CD8-positive, alpha-beta T cell (primary cell): ENCODE measurements at regions of chr1 and their contacts with region 1.

Region 1: DNA sequence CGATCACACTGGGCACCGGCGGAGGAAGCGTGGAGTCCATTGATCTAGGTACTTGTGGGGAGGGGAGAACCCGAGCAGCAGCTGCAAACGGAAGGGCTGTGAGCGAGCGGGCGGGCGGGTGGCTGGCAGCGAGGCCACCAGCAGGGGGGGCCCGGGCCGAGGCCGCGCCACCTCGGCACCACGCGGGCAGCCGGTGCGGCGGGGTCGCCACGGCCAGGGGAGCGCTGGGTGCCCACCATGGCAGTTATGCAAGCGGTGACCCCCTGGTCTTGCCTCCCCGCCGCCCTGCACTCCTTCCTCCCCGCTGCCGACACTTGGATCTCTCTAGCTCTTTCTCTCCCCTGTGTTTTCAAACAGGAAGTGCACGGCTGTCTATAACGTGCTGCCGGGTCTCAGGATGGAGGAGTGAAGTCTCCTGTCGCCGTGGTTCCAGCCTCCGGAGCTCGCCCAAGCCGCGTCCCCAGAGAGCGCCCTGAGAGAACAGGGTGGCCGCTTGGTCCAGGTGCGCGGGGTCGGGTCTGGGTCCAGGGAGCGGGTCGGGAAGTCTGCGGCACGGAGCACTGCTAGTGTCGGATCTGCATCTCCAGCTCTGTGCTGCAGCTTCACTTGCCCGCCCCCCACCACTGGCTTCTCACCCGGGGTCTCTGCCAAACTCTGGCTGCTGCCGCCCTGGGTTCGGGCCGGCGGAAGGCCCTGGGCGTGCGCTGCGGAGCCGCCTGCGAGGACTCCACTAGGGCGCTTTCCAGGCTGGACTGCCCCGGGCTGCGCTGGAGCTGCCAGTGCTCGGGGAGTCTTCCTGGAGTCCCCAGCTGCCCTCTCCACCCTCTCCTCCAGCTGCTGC is 22.7 kb downstream of the LRRC8D start:
- DNase-seq: peak; percentile 55 to 89 (median 77)
- ATAC-seq: peak; percentile 77
- H3K4me3 ChIP-seq: peak overlapping the region; percentile 79 to 92
- H3K4me3 Mint-ChIP-seq: peak overlapping the region; percentile 97
- H3K27ac ChIP-seq: peak overlapping the region; percentile 56 to 75
- H3K27ac Mint-ChIP-seq: peak overlapping the region; percentile 92
- H3K4me1 ChIP-seq: peaks cover 36% of the 10 kb centered on the region
- H3K4me1 Mint-ChIP-seq: peaks cover 53% of the 10 kb centered on the region
- H3K27me3 ChIP-seq: no peaks in the 10 kb centered on the region
- H3K27me3 Mint-ChIP-seq: no peaks in the 10 kb centered on the region
- CTCF ChIP-seq: peak; percentile 79

Region 2: GRCh38 chr1:89820422-89821321 is 22.8 kb before region 1 on chr1 and contains the start of gene LRRC8D:
- CTCF ChIA-PET with region 1: interaction called, 34 read pairs
- POLR2A ChIA-PET with region 1: interaction called, 50 read pairs
- intact Hi-C with region 1: loop called (anchors 1 kb)
- DNase-seq: peak; percentile 10 to 81 (median 64)
- ATAC-seq: peak; percentile 52
- H3K4me3 ChIP-seq: peak within 1 kb of the TSS; percentile 78 to 82
- H3K4me3 Mint-ChIP-seq: peak within 1 kb of the TSS; percentile 87
- H3K27ac ChIP-seq: peak within 1 kb of the TSS; percentile 51 to 63
- H3K27ac Mint-ChIP-seq: peak within 1 kb of the TSS; percentile 91
- H3K4me1 ChIP-seq: peaks cover 23% of the 10 kb centered on the region
- H3K4me1 Mint-ChIP-seq: peaks cover 44% of the 10 kb centered on the region
- H3K27me3 ChIP-seq: no peaks in the 10 kb centered on the region
- H3K27me3 Mint-ChIP-seq: no peaks in the 10 kb centered on the region
- CTCF ChIP-seq: no peak
- total RNA-seq, gene LRRC8D: 14.2 to 16.9 TPM

Region 3: DNA sequence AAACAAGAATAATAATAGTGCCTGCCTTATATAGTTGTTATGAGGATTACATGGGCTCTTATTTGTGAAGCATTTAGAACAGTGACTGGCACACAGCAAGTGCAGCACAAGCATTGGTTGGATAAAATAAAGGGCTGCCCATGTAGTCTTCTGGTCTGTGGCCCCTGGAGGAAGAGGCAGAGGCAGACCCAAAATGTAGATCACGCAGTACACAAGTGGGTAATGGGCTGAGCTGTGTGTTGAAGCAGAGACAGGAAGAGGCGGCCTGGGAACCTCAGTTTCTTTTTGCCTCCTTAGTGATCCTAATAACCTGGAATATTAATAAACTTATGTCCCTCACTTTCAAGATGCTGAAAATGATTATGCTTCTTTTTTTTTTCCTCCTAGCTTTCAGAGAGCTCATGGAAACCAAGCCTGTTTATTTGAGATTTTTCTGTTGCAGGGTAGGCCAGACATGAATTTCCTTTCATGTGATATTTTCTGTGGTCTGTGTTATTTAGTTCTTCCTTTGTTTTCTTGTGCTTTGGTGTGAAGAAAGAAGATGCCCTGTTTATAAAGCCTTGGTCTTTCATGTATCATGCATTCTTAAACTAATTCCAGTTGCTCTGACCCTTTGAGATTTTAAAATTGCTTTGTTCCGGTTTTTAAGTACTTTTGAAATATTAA is 19.8 kb after region 1 on chr1:
- CTCF ChIA-PET with region 1: interaction called, 14 read pairs
- POLR2A ChIA-PET with region 1: interaction called, 11 read pairs
- intact Hi-C with region 1: loop called in 1 of 2 experiments (anchors 2 kb)
- DNase-seq: peak in 2 of 9 experiments; percentile 35 to 52
- ATAC-seq: peak; percentile 63
- H3K4me3 ChIP-seq: no peak overlapping the region
- H3K4me3 Mint-ChIP-seq: peak overlapping the region; percentile 73
- H3K27ac ChIP-seq: peak overlapping the region; percentile 3 to 63
- H3K27ac Mint-ChIP-seq: peak overlapping the region; percentile 98
- H3K4me1 ChIP-seq: peaks cover 39% of the 10 kb centered on the region
- H3K4me1 Mint-ChIP-seq: peaks cover 77% of the 10 kb centered on the region
- H3K27me3 ChIP-seq: no peaks in the 10 kb centered on the region
- H3K27me3 Mint-ChIP-seq: no peaks in the 10 kb centered on the region
- CTCF ChIP-seq: no peak

Region 4: DNA sequence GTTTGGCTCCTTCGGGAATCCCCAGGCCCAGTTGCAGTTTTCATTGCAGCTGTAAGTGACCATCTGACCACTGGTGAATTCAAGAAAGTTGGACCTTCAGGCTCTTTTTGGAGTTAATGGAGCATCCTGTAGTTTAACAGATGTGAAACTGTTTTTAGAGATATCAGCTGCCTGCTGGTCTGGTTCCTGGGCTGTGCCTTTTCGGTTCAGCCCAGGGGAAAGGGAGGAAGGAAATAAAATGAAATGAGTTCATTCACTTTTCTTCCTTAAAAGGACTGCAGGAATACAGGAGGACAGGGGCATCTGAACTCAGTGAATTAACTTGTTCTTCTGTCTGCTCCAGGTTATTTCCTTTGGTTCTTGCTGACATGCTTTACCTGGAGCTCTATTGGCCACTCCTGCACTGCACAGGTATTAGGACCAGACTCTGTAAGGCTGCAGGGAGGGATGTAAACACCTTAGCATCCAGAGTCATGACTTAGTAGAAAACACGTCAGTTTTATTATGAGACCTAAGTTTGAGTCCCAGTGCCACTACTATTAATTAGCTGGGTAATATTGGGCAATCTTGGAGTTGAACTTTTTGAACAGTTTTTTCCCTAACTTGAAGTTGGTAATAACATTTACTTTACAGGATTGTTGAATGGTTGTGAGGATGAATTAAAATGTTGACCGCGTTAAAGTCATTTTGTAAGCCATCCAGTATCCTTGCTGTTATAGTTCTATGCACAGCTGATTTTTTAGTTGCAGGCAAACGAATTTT is 60.9 kb after region 1 on chr1:
- CTCF ChIA-PET with region 1: interaction called, 3 read pairs
- POLR2A ChIA-PET with region 1: interaction called, 3 read pairs
- intact Hi-C with region 1: loop called in 1 of 2 experiments (anchors 5 kb)
- DNase-seq: no peak
- ATAC-seq: no peak
- H3K4me3 ChIP-seq: no peak overlapping the region
- H3K4me3 Mint-ChIP-seq: no peak overlapping the region
- H3K27ac ChIP-seq: no peak overlapping the region
- H3K27ac Mint-ChIP-seq: no peak overlapping the region
- H3K4me1 ChIP-seq: no peaks in the 10 kb centered on the region
- H3K4me1 Mint-ChIP-seq: peaks cover 70% of the 10 kb centered on the region
- H3K27me3 ChIP-seq: no peaks in the 10 kb centered on the region
- H3K27me3 Mint-ChIP-seq: no peaks in the 10 kb centered on the region
- CTCF ChIP-seq: no peak

Region 5: GRCh38 chr1:89987170-89987819 is 143.8 kb after region 1 on chr1:
- CTCF ChIA-PET with region 1: interaction called, 37 read pairs
- POLR2A ChIA-PET with region 1: interaction called, 5 read pairs
- intact Hi-C with region 1: loop called (anchors 1 kb)
- DNase-seq: peak in 8 of 9 experiments; percentile 16 to 81 (median 52)
- ATAC-seq: peak; percentile 95
- H3K4me3 ChIP-seq: no peak overlapping the region
- H3K4me3 Mint-ChIP-seq: no peak overlapping the region
- H3K27ac ChIP-seq: no peak overlapping the region
- H3K27ac Mint-ChIP-seq: no peak overlapping the region
- H3K4me1 ChIP-seq: no peaks in the 10 kb centered on the region
- H3K4me1 Mint-ChIP-seq: no peaks in the 10 kb centered on the region
- H3K27me3 ChIP-seq: no peaks in the 10 kb centered on the region
- H3K27me3 Mint-ChIP-seq: no peaks in the 10 kb centered on the region
- CTCF ChIP-seq: peak; percentile 84

Region 6: GRCh38 chr1:90104941-90105538 is 261.5 kb after region 1 on chr1:
- CTCF ChIA-PET with region 1: no interaction called
- POLR2A ChIA-PET with region 1: no interaction called
- intact Hi-C with region 1: no loop called
- DNase-seq: no peak
- ATAC-seq: no peak
- H3K4me3 ChIP-seq: no peak overlapping the region
- H3K4me3 Mint-ChIP-seq: no peak overlapping the region
- H3K27ac ChIP-seq: no peak overlapping the region
- H3K27ac Mint-ChIP-seq: no peak overlapping the region
- H3K4me1 ChIP-seq: no peaks in the 10 kb centered on the region
- H3K4me1 Mint-ChIP-seq: no peaks in the 10 kb centered on the region
- H3K27me3 ChIP-seq: no peaks in the 10 kb centered on the region
- H3K27me3 Mint-ChIP-seq: peaks cover 14% of the 10 kb centered on the region
- CTCF ChIP-seq: no peak